CD4-positive, alpha-beta memory T cell (primary cell): ENCODE measurements at regions of chr6 and their contacts with region 1.

Region 1: GRCh38 chr6:12011276-12012076 is 636 bp upstream of the HIVEP1 start:
- DNase-seq: peak; percentile 92 to 99 (median 96)
- H3K4me3 ChIP-seq: no peak overlapping the region
- H3K4me3 Mint-ChIP-seq: peak overlapping the region; percentile 85 to 96 (median 92)
- H3K27ac ChIP-seq: no peak overlapping the region
- H3K27ac Mint-ChIP-seq: peak overlapping the region; percentile 94 to 100 (median 97)
- H3K4me1 ChIP-seq: peaks cover 37% of the 10 kb centered on the region
- H3K4me1 Mint-ChIP-seq: peaks cover 30 to 62% (median 46%) of the 10 kb centered on the region in 4 donors
- H3K27me3 ChIP-seq: no peaks in the 10 kb centered on the region
- H3K27me3 Mint-ChIP-seq: peaks cover 0 to 3% of the 10 kb centered on the region in 2 donors

Region 2: DNA sequence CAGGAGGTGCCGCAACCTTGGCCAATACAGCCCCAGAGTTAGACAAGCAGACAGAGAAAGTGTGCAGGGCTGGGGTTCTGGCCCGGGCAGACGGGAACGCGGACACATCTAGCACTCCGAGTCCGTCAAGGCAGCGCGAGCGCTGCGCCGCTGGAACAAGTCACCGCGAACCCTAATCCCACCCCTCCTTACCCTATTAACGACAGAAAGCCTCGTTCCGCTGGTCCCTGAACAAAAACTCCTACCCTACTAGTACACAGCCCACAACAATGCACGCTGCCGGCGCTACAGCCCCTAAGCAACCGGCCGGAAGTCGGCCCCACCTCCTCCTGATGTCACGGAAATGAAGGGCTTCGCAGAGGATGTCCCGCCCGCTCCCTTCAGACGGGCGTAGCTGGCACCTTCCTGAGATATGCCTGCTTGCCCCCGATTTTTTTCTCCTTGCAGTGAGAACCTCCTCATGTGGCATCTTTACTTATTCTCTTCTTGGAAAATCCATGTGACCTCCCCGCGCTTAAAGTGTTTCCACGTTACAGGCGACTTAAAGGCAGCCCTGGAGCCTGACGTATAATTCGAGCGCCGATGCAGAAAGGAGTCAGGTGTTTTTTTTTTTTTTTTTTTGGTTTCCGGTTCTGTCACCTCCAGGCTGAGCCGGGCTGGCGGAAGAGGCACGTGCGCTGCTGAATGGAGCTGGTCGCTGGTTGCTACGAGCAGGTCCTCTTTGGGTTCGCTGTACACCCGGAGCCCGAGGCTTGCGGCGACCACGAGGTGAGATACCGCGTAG is 1317.0 kb before region 1 on chr6 and contains the starts of genes C6orf52 and PAK1IP1:
- CTCF ChIA-PET with region 1: no interaction called
- POLR2A ChIA-PET with region 1: no interaction called
- intact Hi-C with region 1: loop called (anchors 5 kb)
- DNase-seq: peak; percentile 96 to 97 (median 97)
- H3K4me3 ChIP-seq: peak within 1 kb of the TSS; percentile 45 to 88
- H3K4me3 Mint-ChIP-seq: peak within 1 kb of the TSS; percentile 93 to 100 (median 98)
- H3K27ac ChIP-seq: peak within 1 kb of the TSS; percentile 92
- H3K27ac Mint-ChIP-seq: peak within 1 kb of the TSS; percentile 100
- H3K4me1 ChIP-seq: peaks cover 34% of the 10 kb centered on the region
- H3K4me1 Mint-ChIP-seq: peaks cover 25 to 49% (median 34%) of the 10 kb centered on the region in 4 donors
- H3K27me3 ChIP-seq: no peaks in the 10 kb centered on the region
- H3K27me3 Mint-ChIP-seq: peaks cover 2 to 6% of the 10 kb centered on the region in 2 donors
- total RNA-seq, gene C6orf52: 1.2 to 1.5 TPM
- total RNA-seq, gene PAK1IP1: 7.2 to 7.4 TPM

Region 3: DNA sequence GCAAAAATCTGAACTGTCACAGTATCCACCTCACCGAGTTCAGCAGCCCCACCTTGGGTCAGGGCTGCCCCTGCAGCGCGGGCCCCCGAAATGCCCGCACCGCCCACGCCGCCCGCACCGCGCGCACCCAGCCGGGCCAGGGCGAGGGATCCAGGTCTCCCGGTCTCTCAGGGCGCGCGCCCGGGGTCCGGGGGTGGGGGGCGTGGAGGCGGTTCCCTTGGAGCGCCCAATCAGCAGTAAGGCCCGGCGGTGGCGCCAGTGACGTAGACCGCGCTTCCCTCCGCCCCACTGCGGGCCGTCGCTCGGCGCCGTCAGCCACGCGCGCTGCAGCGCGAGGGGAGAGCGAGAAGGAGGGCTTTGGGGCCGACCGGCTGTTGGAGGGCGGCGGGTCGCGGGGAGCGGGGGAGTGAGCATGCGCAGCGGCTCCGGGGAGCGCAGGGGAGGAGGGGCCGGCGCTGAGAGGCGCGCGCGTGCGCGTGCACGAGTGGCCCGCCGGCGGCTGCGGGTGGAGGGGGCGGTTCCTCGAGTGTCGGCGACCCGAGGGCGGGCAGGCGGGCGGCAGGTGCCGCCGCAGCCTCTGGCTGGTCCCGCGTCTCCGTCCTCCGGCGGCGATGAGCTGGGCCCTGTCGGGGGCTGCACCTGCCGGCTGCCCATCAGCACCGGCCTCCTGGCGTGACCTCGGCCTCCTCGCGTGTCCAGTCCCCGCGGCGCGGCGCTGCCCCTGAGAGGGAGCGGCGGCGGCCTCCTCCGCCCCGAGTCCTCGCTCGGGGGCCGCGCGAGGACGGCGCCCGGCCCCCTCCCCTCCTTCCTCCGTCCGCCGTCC is 474.0 kb before region 1 on chr6 and contains the start of gene TMEM170B:
- CTCF ChIA-PET with region 1: no interaction called
- POLR2A ChIA-PET with region 1: no interaction called
- intact Hi-C with region 1: loop called (anchors 1 kb)
- DNase-seq: peak; percentile 94 to 98 (median 97)
- H3K4me3 ChIP-seq: peak within 1 kb of the TSS; percentile 60 to 77
- H3K4me3 Mint-ChIP-seq: peak within 1 kb of the TSS; percentile 86 to 92 (median 90)
- H3K27ac ChIP-seq: peak within 1 kb of the TSS; percentile 54
- H3K27ac Mint-ChIP-seq: peak within 1 kb of the TSS; percentile 72 to 94 (median 92)
- H3K4me1 ChIP-seq: peaks cover 11% of the 10 kb centered on the region
- H3K4me1 Mint-ChIP-seq: peaks cover 7 to 24% (median 9%) of the 10 kb centered on the region in 4 donors
- H3K27me3 ChIP-seq: no peaks in the 10 kb centered on the region
- H3K27me3 Mint-ChIP-seq: peaks cover 2 to 4% of the 10 kb centered on the region in 2 donors
- total RNA-seq, gene TMEM170B: 1.9 to 2.1 TPM

Region 4: GRCh38 chr6:11722805-11723631 is 288.5 kb before region 1 on chr6:
- CTCF ChIA-PET with region 1: no interaction called
- POLR2A ChIA-PET with region 1: interaction called, 15 read pairs
- intact Hi-C with region 1: loop called (anchors 2 kb)
- DNase-seq: peak in 3 of 5 donors; percentile 22 to 44 (median 33)
- H3K4me3 ChIP-seq: peak overlapping the region in 1 of 2 donors; percentile 7
- H3K4me3 Mint-ChIP-seq: peak overlapping the region; percentile 67 to 83 (median 74)
- H3K27ac ChIP-seq: peak overlapping the region; percentile 30
- H3K27ac Mint-ChIP-seq: peak overlapping the region; percentile 33 to 95 (median 85)
- H3K4me1 ChIP-seq: peaks cover 26% of the 10 kb centered on the region
- H3K4me1 Mint-ChIP-seq: peaks cover 37 to 51% (median 40%) of the 10 kb centered on the region in 4 donors
- H3K27me3 ChIP-seq: no peaks in the 10 kb centered on the region
- H3K27me3 Mint-ChIP-seq: peaks cover 0 to 3% of the 10 kb centered on the region in 2 donors

Region 5: GRCh38 chr6:11978169-11978987 is 33.1 kb before region 1 on chr6:
- CTCF ChIA-PET with region 1: interaction called, 4 read pairs
- POLR2A ChIA-PET with region 1: no interaction called
- intact Hi-C with region 1: loop called (anchors 2 kb)
- DNase-seq: no peak
- H3K4me3 ChIP-seq: no peak overlapping the region
- H3K4me3 Mint-ChIP-seq: no peak overlapping the region
- H3K27ac ChIP-seq: no peak overlapping the region
- H3K27ac Mint-ChIP-seq: peak overlapping the region in 1 of 7 donors; percentile 33
- H3K4me1 ChIP-seq: peaks cover 5% of the 10 kb centered on the region
- H3K4me1 Mint-ChIP-seq: peaks cover 5 to 10% (median 9%) of the 10 kb centered on the region in 4 donors
- H3K27me3 ChIP-seq: no peaks in the 10 kb centered on the region
- H3K27me3 Mint-ChIP-seq: peaks cover 0 to 2% of the 10 kb centered on the region in 2 donors

Region 6: GRCh38 chr6:12001004-12001705 is 10.3 kb before region 1 on chr6:
- CTCF ChIA-PET with region 1: no interaction called
- POLR2A ChIA-PET with region 1: no interaction called
- intact Hi-C with region 1: no loop called
- DNase-seq: no peak
- H3K4me3 ChIP-seq: no peak overlapping the region
- H3K4me3 Mint-ChIP-seq: no peak overlapping the region
- H3K27ac ChIP-seq: no peak overlapping the region
- H3K27ac Mint-ChIP-seq: no peak overlapping the region
- H3K4me1 ChIP-seq: no peaks in the 10 kb centered on the region
- H3K4me1 Mint-ChIP-seq: peaks cover 0 to 1% (median 0%) of the 10 kb centered on the region in 4 donors
- H3K27me3 ChIP-seq: no peaks in the 10 kb centered on the region
- H3K27me3 Mint-ChIP-seq: peaks cover 0 to 2% of the 10 kb centered on the region in 2 donors

Region 7: GRCh38 chr6:12137480-12137879 is 126.0 kb after region 1 on chr6:
- CTCF ChIA-PET with region 1: no interaction called
- POLR2A ChIA-PET with region 1: no interaction called
- intact Hi-C with region 1: loop called (anchors 5 kb)
- DNase-seq: no peak
- H3K4me3 ChIP-seq: no peak overlapping the region
- H3K4me3 Mint-ChIP-seq: no peak overlapping the region
- H3K27ac ChIP-seq: no peak overlapping the region
- H3K27ac Mint-ChIP-seq: peak overlapping the region in 1 of 7 donors; percentile 12
- H3K4me1 ChIP-seq: peaks cover 21% of the 10 kb centered on the region
- H3K4me1 Mint-ChIP-seq: peaks cover 11 to 21% (median 17%) of the 10 kb centered on the region in 4 donors
- H3K27me3 ChIP-seq: no peaks in the 10 kb centered on the region
- H3K27me3 Mint-ChIP-seq: no peaks in the 10 kb centered on the region